ENCODE measurements at regions of chr9 and their contacts with region 1.

Region 1: GRCh38 chr9:136093995-136094881 is 851 bp downstream of the NACC2 start:
- DNase-seq: peak; percentile 77
- ATAC-seq: peak; percentile 64
- H3K4me3 Mint-ChIP-seq: peak overlapping the region; percentile 63
- H3K27ac Mint-ChIP-seq: no peak overlapping the region
- H3K4me1 Mint-ChIP-seq: peaks cover 16% of the 10 kb centered on the region
- H3K27me3 Mint-ChIP-seq: no peaks in the 10 kb centered on the region

Region 2: GRCh38 chr9:136109351-136110081 is 15.3 kb after region 1 on chr9:
- CTCF ChIA-PET with region 1: interaction called, 51 read pairs
- DNase-seq: peak; percentile 96
- ATAC-seq: peak; percentile 86
- H3K4me3 Mint-ChIP-seq: peak overlapping the region; percentile 85
- H3K27ac Mint-ChIP-seq: peak overlapping the region; percentile 94
- H3K4me1 Mint-ChIP-seq: peaks cover 77% of the 10 kb centered on the region
- H3K27me3 Mint-ChIP-seq: no peaks in the 10 kb centered on the region

Region 3: DNA sequence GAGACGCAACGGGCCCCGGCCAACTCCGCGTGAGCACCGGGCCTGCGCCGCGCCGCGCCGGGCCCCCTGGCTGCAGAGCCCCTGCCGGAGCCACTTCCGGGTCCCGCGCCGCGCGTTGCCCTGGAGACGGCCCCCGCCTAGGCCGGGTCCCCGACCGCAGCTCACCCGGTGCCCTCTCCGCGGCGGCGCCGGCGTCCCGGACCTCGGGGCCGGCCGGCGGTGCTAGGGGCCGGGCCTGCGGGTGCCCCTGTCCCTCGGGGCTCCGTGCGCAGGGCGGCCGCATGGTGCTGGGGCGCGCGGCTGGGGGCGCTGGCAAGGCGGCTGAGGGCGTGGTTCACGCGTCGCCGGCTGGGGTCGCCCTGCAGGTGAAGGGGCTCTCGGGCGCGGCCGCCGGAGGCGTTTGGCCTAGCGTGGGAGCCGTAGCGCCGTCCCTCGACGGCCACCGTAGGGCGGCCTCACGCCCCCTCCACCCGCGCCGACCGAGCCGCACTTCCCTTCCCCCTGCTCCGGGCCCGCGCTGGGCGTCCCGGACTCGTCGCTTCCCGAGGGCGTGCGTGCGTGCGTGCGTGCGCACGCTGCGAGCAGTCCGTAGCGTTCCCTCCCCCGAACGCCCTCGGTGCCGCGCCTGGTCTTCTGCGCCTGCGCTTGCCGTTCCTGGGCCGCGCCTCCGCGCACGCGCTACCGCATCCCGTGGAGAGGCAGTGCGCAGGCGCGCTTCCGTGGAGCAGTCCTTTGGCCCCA is 24.3 kb after region 1 on chr9 and contains the start of gene TMEM250:
- CTCF ChIA-PET with region 1: interaction called, 47 read pairs
- DNase-seq: peak; percentile 98
- ATAC-seq: peak; percentile 91
- H3K4me3 Mint-ChIP-seq: peak within 1 kb of the TSS; percentile 79
- H3K27ac Mint-ChIP-seq: peak within 1 kb of the TSS; percentile 80
- H3K4me1 Mint-ChIP-seq: peaks cover 33% of the 10 kb centered on the region
- H3K27me3 Mint-ChIP-seq: no peaks in the 10 kb centered on the region
- total RNA-seq, gene TMEM250: 42.5 to 44.5 TPM

Region 4: DNA sequence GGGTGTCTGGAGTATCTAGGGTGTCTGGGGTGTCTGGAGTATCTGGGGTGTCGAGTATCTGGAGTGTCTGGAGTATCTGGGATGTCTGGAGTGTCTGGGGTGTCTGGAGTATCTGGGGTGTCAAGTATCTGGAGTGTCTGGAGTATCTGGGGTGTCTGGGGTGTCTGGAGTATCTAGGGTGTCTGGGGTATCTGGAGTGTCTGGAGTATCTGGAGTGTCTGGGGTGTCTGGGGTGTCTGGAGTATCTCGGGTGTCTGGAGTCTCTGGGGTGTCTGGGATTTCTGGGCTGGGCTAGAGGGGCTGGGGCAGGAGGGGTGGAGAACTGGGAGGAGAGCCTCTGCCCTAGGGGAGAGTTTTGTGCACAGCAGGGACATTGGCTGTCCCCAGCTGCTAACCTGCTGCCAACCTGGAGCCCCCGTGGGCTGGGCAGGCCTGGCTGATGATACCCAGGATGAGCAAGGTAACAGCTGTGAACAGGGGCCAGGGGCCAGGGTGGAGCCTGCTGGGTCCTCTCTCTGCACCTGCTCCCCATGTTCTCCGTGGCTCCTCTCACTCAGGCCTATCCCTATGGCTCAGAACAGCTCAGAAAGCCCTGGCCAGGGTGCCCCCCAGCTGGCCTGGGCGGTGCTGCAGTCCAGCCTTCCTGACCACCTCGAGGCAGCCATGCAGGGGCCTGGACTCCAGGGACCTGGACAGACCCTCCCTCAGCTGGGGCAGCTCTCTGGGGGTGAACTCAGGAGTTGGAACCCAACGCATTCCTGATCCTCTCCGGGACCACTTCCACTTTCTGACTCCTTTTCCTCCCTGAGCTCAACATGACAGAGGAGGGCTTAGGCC is 80.8 kb after region 1 on chr9:
- CTCF ChIA-PET with region 1: no interaction called
- DNase-seq: no peak
- ATAC-seq: no peak
- H3K4me3 Mint-ChIP-seq: no peak overlapping the region
- H3K27ac Mint-ChIP-seq: no peak overlapping the region
- H3K4me1 Mint-ChIP-seq: no peaks in the 10 kb centered on the region
- H3K27me3 Mint-ChIP-seq: no peaks in the 10 kb centered on the region